ENCODE measurements at regions of chr3 and their contacts with region 1.

Region 1: GRCh38 chr3:146313411-146314111 is 62.7 kb upstream of the PLSCR4 start:
- DNase-seq: no peak

Region 2: GRCh38 chr3:146250449-146251382 is 62.8 kb before region 1 on chr3 and contains the start of gene PLSCR4:
- intact Hi-C with region 1: loop called (anchors 1 kb)
- DNase-seq: peak; percentile 88
- total RNA-seq, gene PLSCR4: 14.2 TPM